ENCODE measurements at regions of chr13 and their contacts with region 1.

Region 1: DNA sequence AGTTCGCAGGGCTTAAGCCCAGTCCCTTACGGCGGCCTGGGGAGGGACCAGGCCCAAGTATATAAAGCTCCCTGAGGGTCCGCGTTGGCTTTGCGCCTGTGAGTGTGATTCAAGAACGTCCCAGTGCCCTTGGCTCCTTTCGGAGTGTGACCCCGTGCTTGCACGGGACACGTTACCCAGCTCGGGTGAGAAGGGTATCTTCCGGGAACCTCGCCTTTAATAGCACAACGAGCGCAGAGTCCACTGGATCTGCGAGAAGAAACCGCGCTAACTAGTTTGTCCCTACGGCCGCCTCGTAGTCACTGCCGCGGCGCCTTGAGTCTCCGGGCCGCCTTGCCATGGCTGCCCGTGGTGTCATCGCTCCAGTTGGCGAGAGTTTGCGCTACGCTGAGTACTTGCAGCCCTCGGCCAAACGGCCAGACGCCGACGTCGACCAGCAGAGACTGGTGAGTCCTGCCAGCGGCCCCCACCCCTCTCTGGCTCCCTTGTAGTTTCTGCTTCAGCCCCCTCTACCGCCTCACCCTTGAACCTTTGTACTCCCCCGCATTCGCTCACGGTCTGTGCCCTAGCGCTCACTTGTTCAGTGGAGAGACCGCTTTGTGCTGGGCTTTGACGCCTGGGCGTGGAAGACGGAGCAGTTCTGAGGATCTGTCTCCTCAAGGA is at the start of gene DNAJC15:
- DNase-seq: peak; percentile 72 to 88 (median 80)
- ATAC-seq: peak; percentile 93
- H3K4me3 ChIP-seq: peak within 1 kb of the TSS; percentile 87
- H3K4me3 Mint-ChIP-seq: peak within 1 kb of the TSS; percentile 92 to 100 (median 99)
- H3K27ac ChIP-seq: peak within 1 kb of the TSS; percentile 83
- H3K27ac Mint-ChIP-seq: peak within 1 kb of the TSS; percentile 92 to 99 (median 98)
- H3K4me1 ChIP-seq: peaks cover 9 to 20% of the 10 kb centered on the region in 2 donors
- H3K4me1 Mint-ChIP-seq: peaks cover 20 to 47% (median 38%) of the 10 kb centered on the region in 7 donors
- H3K27me3 ChIP-seq: no peaks in the 10 kb centered on the region
- H3K27me3 Mint-ChIP-seq: no peaks in the 10 kb centered on the region
- total RNA-seq, gene DNAJC15: 5.0 to 18.3 (median 10.5) TPM

Region 2: GRCh38 chr13:42991892-42992763 is 31.3 kb before region 1 on chr13 and contains the start of gene EPSTI1:
- CTCF ChIA-PET with region 1: no interaction called
- POLR2A ChIA-PET with region 1: interaction called, 36 read pairs
- intact Hi-C with region 1: loop called (anchors 1 kb)
- DNase-seq: peak; percentile 61 to 84 (median 77)
- ATAC-seq: peak; percentile 88
- H3K4me3 ChIP-seq: peak within 1 kb of the TSS; percentile 77
- H3K4me3 Mint-ChIP-seq: peak within 1 kb of the TSS; percentile 92 to 98 (median 96)
- H3K27ac ChIP-seq: peak within 1 kb of the TSS; percentile 94
- H3K27ac Mint-ChIP-seq: peak within 1 kb of the TSS; percentile 99 to 100 (median 100)
- H3K4me1 ChIP-seq: peaks cover 13 to 15% of the 10 kb centered on the region in 2 donors
- H3K4me1 Mint-ChIP-seq: peaks cover 27 to 73% (median 51%) of the 10 kb centered on the region in 7 donors
- H3K27me3 ChIP-seq: no peaks in the 10 kb centered on the region
- H3K27me3 Mint-ChIP-seq: no peaks in the 10 kb centered on the region
- total RNA-seq, gene EPSTI1: 8.4 to 125 (median 11.0) TPM

Region 3: GRCh38 chr13:43044720-43045301 is 21.4 kb after region 1 on chr13:
- CTCF ChIA-PET with region 1: no interaction called
- POLR2A ChIA-PET with region 1: interaction called, 3 read pairs
- intact Hi-C with region 1: loop called in 1 of 2 experiments (anchors 2 kb)
- DNase-seq: no peak
- ATAC-seq: no peak
- H3K4me3 ChIP-seq: no peak overlapping the region
- H3K4me3 Mint-ChIP-seq: peak overlapping the region in 8 of 10 donors; percentile 2 to 49 (median 14)
- H3K27ac ChIP-seq: peak overlapping the region; percentile 1
- H3K27ac Mint-ChIP-seq: peak overlapping the region; percentile 0 to 88 (median 53)
- H3K4me1 ChIP-seq: peaks cover 15 to 16% of the 10 kb centered on the region in 2 donors
- H3K4me1 Mint-ChIP-seq: peaks cover 32 to 84% (median 71%) of the 10 kb centered on the region in 7 donors
- H3K27me3 ChIP-seq: no peaks in the 10 kb centered on the region
- H3K27me3 Mint-ChIP-seq: no peaks in the 10 kb centered on the region

Region 4: GRCh38 chr13:43089912-43090498 is 66.6 kb after region 1 on chr13:
- CTCF ChIA-PET with region 1: no interaction called
- POLR2A ChIA-PET with region 1: no interaction called
- intact Hi-C with region 1: no loop called
- DNase-seq: no peak
- ATAC-seq: no peak
- H3K4me3 ChIP-seq: no peak overlapping the region
- H3K4me3 Mint-ChIP-seq: no peak overlapping the region
- H3K27ac ChIP-seq: no peak overlapping the region
- H3K27ac Mint-ChIP-seq: no peak overlapping the region
- H3K4me1 ChIP-seq: no peaks in the 10 kb centered on the region
- H3K4me1 Mint-ChIP-seq: peaks cover 2 to 26% (median 24%) of the 10 kb centered on the region in 7 donors
- H3K27me3 ChIP-seq: no peaks in the 10 kb centered on the region
- H3K27me3 Mint-ChIP-seq: no peaks in the 10 kb centered on the region

Region 5: GRCh38 chr13:44676534-44676933 is 1653.1 kb after region 1 on chr13:
- CTCF ChIA-PET with region 1: no interaction called
- POLR2A ChIA-PET with region 1: no interaction called
- intact Hi-C with region 1: no loop called
- DNase-seq: no peak
- ATAC-seq: no peak
- H3K4me3 ChIP-seq: no peak overlapping the region
- H3K4me3 Mint-ChIP-seq: no peak overlapping the region
- H3K27ac ChIP-seq: no peak overlapping the region
- H3K27ac Mint-ChIP-seq: no peak overlapping the region
- H3K4me1 ChIP-seq: no peaks in the 10 kb centered on the region
- H3K4me1 Mint-ChIP-seq: no peaks in the 10 kb centered on the region
- H3K27me3 ChIP-seq: no peaks in the 10 kb centered on the region
- H3K27me3 Mint-ChIP-seq: peaks cover 0 to 9% (median 2%) of the 10 kb centered on the region in 5 donors

Measured in naive thymus-derived CD4-positive, alpha-beta T cell (primary cell).